Mammary epithelial cell (primary cell): ENCODE measurements at regions of chr9 and their contacts with region 1.

Region 1: GRCh38 chr9:71096421-71097108 is 24.9 kb downstream of the TRPM3 start:
- DNase-seq: no peak
- H3K4me3 ChIP-seq: no peak overlapping the region
- H3K27ac ChIP-seq: no peak overlapping the region
- H3K4me1 ChIP-seq: no peaks in the 10 kb centered on the region
- H3K27me3 ChIP-seq: no peaks in the 10 kb centered on the region
- CTCF ChIP-seq: no peak

Region 2: DNA sequence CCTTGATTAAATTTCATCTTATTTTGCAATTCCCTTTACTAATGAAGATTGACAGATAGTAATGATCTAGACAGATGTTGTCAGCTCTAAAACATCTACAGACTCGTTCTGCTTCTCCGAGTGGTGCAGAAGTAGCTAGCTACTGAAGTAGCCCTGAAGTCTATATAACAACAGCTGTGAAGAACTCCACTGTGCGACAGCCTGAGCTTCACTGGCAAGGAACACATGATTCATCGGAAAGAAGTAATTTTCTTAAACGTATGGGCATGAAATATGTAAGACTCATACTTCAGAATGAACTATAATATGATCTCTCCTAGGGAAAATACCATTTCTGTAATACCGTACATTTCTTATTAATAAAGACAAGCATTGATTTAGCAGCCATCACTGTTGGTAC is 71.4 kb before region 1 on chr9:
- CTCF ChIA-PET with region 1: no interaction called
- dilution Hi-C with region 1: loop called (anchors 5 kb)
- in situ Hi-C with region 1: no loop called
- intact Hi-C with region 1: no loop called
- DNase-seq: no peak
- H3K4me3 ChIP-seq: no peak overlapping the region
- H3K27ac ChIP-seq: no peak overlapping the region
- H3K4me1 ChIP-seq: no peaks in the 10 kb centered on the region
- H3K27me3 ChIP-seq: peaks cover 2% of the 10 kb centered on the region
- CTCF ChIP-seq: no peak

Region 3: DNA sequence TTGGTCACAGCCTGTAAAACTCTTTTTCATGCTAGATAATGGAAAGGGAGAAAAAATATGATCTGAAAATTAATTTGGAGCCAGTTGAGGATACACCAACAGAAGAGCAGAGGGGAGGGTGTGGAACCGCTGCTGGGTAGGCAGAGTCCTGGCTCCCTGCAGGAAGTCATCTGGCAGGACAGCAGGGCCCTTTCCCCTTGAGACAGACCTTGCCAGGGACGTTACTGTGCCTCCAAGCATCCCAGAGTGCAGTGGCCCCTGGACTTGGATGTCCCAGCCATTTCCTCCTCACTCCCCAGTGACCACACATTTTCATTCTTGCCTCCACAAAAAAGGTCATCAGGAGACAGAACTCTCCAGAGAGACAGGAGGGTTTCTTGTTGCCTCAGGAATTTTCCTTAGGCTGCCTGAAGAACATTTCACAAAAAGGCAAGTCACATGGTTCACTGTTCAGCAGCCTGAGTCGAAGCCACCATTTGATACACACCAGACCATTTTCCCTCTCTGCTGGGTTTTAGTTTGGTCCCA is 18.9 kb after region 1 on chr9:
- CTCF ChIA-PET with region 1: no interaction called
- dilution Hi-C with region 1: no loop called
- in situ Hi-C with region 1: no loop called
- intact Hi-C with region 1: no loop called
- DNase-seq: no peak
- H3K4me3 ChIP-seq: no peak overlapping the region
- H3K27ac ChIP-seq: no peak overlapping the region
- H3K4me1 ChIP-seq: no peaks in the 10 kb centered on the region
- H3K27me3 ChIP-seq: no peaks in the 10 kb centered on the region
- CTCF ChIP-seq: no peak

Region 4: DNA sequence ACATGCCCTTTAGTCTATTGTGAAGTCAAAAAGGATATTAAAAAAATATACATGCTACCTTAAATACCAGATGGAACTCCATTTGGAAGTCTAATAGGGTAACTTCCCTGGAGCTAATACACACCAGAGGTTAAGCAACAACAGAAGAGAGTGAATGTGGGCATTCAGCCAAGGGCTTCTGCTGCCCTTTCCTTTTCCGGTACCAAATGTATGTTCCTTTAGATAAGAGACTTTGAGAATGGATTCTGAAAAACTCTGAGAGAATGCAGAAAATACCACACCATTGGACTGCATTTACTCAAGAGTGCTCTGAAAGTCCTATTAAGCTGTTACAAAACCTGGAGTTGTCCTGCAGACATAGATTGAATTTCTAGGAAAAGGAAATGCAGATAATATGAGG is 48.6 kb after region 1 on chr9:
- CTCF ChIA-PET with region 1: no interaction called
- dilution Hi-C with region 1: no loop called
- in situ Hi-C with region 1: no loop called
- intact Hi-C with region 1: loop called (anchors 5 kb)
- DNase-seq: no peak
- H3K4me3 ChIP-seq: no peak overlapping the region
- H3K27ac ChIP-seq: no peak overlapping the region
- H3K4me1 ChIP-seq: no peaks in the 10 kb centered on the region
- H3K27me3 ChIP-seq: no peaks in the 10 kb centered on the region
- CTCF ChIP-seq: no peak

Region 5: DNA sequence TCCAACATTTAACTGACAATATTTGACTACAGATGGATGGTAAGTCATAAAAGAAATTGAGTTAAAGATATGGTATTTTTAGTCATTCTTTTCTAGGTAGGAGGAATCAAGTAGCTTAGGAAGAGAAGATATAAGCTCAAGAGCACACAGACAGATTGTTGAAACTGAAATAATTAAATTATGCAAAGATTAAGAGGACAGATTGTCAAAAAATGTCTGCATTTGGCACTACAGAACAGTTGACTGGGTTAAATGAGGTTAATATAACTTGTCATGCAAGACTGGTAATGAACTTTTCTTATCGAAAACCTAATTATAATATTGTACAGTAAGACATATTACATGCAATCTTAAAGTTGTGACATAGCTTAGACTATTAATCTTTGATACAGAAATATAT is 61.2 kb after region 1 on chr9:
- CTCF ChIA-PET with region 1: no interaction called
- dilution Hi-C with region 1: no loop called
- in situ Hi-C with region 1: no loop called
- intact Hi-C with region 1: no loop called
- DNase-seq: no peak
- H3K4me3 ChIP-seq: no peak overlapping the region
- H3K27ac ChIP-seq: no peak overlapping the region
- H3K4me1 ChIP-seq: no peaks in the 10 kb centered on the region
- H3K27me3 ChIP-seq: no peaks in the 10 kb centered on the region
- CTCF ChIP-seq: no peak